RWPE1 (cell line): ENCODE measurements at regions of chr17 and their contacts with region 1.

Region 1: GRCh38 chr17:7687908-7688807 is at the start of gene WRAP53:
- DNase-seq: peak; percentile 97
- H3K27ac ChIP-seq: peak within 1 kb of the TSS; percentile 97
- CTCF ChIP-seq: peak; percentile 99

Region 2: DNA sequence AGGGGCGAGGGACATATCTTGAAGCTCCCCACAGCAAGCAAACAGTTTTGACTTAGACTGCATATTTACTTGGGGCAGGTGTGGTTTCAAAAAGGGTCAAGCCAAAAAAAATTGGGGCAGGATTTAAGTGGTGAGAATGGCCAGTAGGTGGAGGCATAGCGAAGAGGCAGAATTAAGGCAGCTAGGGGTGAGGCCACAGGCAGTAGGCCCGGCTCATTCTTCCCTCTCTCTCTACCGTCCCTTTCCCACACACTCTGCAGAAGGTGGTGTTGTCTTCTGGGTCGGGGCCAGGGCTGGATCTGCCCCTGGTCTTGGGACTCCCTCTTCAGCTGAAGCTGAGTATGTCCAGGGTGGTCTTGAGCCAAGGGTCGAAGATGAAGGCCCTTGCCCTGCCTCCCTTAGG is 55.7 kb before region 1 on chr17:
- CTCF ChIA-PET with region 1: interaction called, 14 read pairs
- POLR2A ChIA-PET with region 1: interaction called, 3 read pairs
- DNase-seq: peak; percentile 58
- H3K27ac ChIP-seq: no peak overlapping the region
- CTCF ChIP-seq: no peak; the same call in 1 of the 2 replicates

Region 3: DNA sequence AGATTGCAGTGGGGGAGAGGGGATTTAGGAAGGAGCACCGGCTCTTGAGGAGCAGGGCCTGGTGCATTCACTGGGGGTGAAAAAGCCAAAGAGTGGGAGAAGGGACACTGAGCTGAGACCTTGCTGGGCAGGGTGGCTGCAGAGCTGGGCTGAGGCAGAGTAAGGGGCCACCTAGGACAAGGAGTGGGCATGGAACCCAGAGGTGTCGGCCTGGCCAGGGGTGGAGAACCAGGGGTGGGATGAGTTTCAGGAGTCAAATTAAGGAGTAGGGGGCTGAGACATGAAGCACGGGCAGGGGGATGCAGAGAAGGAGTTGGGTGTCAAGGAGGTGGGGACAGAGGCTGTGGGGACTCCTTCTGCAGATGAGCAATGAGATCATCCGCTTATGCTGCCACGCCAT is 49.4 kb after region 1 on chr17:
- CTCF ChIA-PET with region 1: no interaction called
- POLR2A ChIA-PET with region 1: no interaction called
- DNase-seq: no peak
- H3K27ac ChIP-seq: no peak overlapping the region
- CTCF ChIP-seq: no peak